ENCODE measurements at regions of chr13 and their contacts with region 1.

Region 1: GRCh38 chr13:29771247-29771646 is 79.2 kb downstream of the UBL3 start:
- DNase-seq: no peak
- ATAC-seq: peak; percentile 74
- H3K4me3 ChIP-seq: no peak overlapping the region
- H3K27ac ChIP-seq: no peak overlapping the region
- H3K4me1 ChIP-seq: no peaks in the 10 kb centered on the region
- H3K27me3 ChIP-seq: no peaks in the 10 kb centered on the region
- CTCF ChIP-seq: peak in 2 of 3 experiments; percentile 20 to 56; a peak in 4 of 6 replicates
- EP300 ChIP-seq: no peak
- POLR2A ChIP-seq: no peak
- RAD21 ChIP-seq: peak; percentile 68

Region 2: DNA sequence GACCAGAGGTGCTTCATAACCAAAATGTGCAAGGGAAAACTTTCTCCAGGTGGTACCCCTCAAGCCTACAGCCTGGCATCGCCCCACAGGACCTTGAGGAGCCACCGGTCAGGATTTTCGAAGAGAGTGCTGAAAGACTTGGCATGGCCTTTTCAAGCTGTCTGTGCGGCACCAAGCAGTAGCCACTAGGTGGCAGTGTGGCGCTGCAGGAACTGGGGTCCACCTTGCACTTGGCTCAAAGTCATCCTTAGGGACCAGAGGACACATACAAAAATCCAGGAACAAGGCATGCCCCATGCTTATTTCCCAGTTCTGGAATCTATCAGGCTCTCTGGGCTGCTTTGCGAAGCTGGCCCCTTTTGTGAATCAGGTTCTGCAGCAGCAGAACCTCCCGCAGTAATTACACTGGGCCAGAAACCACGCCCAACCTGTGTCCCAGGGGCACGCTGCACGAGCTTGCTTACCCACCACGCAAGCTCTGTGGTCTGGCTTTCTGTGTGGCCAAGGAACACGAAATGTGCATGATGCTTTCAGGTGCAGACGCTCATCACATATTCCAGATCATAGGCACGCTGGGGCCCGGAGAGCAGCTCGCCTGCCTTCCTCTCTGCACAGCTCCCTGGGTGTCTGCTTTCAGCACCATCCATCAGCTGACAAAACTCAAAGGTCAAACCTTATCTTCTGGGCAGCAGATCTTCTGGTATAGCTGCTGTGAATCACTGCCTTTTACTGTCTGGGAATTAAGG is 262.9 kb before region 1 on chr13:
- CTCF ChIA-PET with region 1: interaction called, 28 read pairs
- POLR2A ChIA-PET with region 1: no interaction called
- RAD21 ChIA-PET with region 1: interaction called, 8 read pairs
- SMC1A ChIA-PET with region 1: interaction called, 10 read pairs
- in situ Hi-C with region 1: no loop called
- intact Hi-C with region 1: no loop called
- DNase-seq: no peak
- ATAC-seq: peak; percentile 94
- H3K4me3 ChIP-seq: no peak overlapping the region
- H3K27ac ChIP-seq: no peak overlapping the region
- H3K4me1 ChIP-seq: no peaks in the 10 kb centered on the region
- H3K27me3 ChIP-seq: no peaks in the 10 kb centered on the region
- CTCF ChIP-seq: peak; percentile 86 to 98 (median 98)
- EP300 ChIP-seq: no peak
- POLR2A ChIP-seq: peak; percentile 67
- RAD21 ChIP-seq: peak; percentile 91

Region 3: DNA sequence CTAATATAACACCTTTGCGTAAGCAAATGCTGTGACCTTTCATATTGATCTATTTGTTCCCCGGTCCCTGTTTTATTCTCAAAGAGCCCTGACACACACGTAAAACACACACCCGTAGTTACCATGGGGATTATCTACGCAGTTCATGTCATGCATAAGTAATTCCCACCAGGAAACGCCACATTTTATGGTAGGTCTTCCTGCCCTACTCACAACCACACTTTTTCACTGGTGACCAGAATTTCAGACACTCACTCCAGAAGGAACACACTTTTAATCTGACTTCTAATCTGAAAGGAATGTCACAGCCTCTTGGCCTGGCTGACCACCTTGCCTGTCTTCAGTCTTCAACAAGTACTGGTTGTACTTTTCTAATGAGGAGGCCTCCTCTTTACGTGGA is 222.5 kb before region 1 on chr13:
- CTCF ChIA-PET with region 1: no interaction called
- POLR2A ChIA-PET with region 1: no interaction called
- RAD21 ChIA-PET with region 1: no interaction called
- SMC1A ChIA-PET with region 1: no interaction called
- in situ Hi-C with region 1: no loop called
- intact Hi-C with region 1: no loop called
- DNase-seq: no peak
- ATAC-seq: no peak
- H3K4me3 ChIP-seq: no peak overlapping the region
- H3K27ac ChIP-seq: no peak overlapping the region
- H3K4me1 ChIP-seq: peaks cover 3% of the 10 kb centered on the region; the same call in 1 of the 2 replicates
- H3K27me3 ChIP-seq: no peaks in the 10 kb centered on the region
- CTCF ChIP-seq: no peak
- EP300 ChIP-seq: no peak
- POLR2A ChIP-seq: no peak
- RAD21 ChIP-seq: no peak

Region 4: GRCh38 chr13:29782798-29783197 is 11.6 kb after region 1 on chr13:
- CTCF ChIA-PET with region 1: interaction called, 23 read pairs
- POLR2A ChIA-PET with region 1: no interaction called
- RAD21 ChIA-PET with region 1: interaction called, 8 read pairs
- SMC1A ChIA-PET with region 1: interaction called, 10 read pairs
- in situ Hi-C with region 1: no loop called
- intact Hi-C with region 1: no loop called
- DNase-seq: no peak
- ATAC-seq: peak; percentile 88
- H3K4me3 ChIP-seq: no peak overlapping the region
- H3K27ac ChIP-seq: peak overlapping the region; percentile 33; the same call in 1 of the 2 replicates
- H3K4me1 ChIP-seq: no peaks in the 10 kb centered on the region
- H3K27me3 ChIP-seq: no peaks in the 10 kb centered on the region
- CTCF ChIP-seq: no peak
- EP300 ChIP-seq: no peak
- POLR2A ChIP-seq: no peak
- RAD21 ChIP-seq: no peak

Region 5: GRCh38 chr13:29810145-29810742 is 39.0 kb after region 1 on chr13:
- CTCF ChIA-PET with region 1: interaction called, 11 read pairs
- POLR2A ChIA-PET with region 1: no interaction called
- RAD21 ChIA-PET with region 1: interaction called, 5 read pairs
- SMC1A ChIA-PET with region 1: interaction called, 6 read pairs
- in situ Hi-C with region 1: no loop called
- intact Hi-C with region 1: no loop called
- DNase-seq: no peak
- ATAC-seq: peak; percentile 48
- H3K4me3 ChIP-seq: no peak overlapping the region
- H3K27ac ChIP-seq: no peak overlapping the region
- H3K4me1 ChIP-seq: peaks cover 11% of the 10 kb centered on the region; the same call in 1 of the 2 replicates
- H3K27me3 ChIP-seq: no peaks in the 10 kb centered on the region
- CTCF ChIP-seq: no peak
- EP300 ChIP-seq: no peak
- POLR2A ChIP-seq: no peak
- RAD21 ChIP-seq: no peak

Region 6: DNA sequence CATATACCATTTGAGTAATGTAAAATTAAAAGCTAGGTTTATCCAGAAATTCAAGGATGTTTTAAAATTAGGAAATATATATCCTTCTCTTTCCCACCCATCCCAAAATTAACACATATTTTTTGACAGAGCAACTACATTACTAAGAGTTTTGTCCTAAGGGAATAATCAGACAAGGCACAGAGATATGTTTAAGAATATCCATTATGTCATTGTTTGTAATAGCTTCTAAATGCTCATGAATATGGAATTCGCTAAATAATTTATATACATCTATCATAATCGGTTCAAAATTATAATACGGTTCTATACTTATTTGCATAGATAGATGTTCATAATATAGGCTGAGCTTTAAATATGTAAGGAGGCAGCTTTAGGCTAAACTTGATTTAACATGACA is 69.3 kb after region 1 on chr13:
- CTCF ChIA-PET with region 1: interaction called, 112 read pairs
- POLR2A ChIA-PET with region 1: no interaction called
- RAD21 ChIA-PET with region 1: interaction called, 46 read pairs
- SMC1A ChIA-PET with region 1: interaction called, 155 read pairs
- in situ Hi-C with region 1: loop called (anchors 5 kb)
- intact Hi-C with region 1: no loop called
- DNase-seq: no peak
- ATAC-seq: no peak
- H3K4me3 ChIP-seq: no peak overlapping the region
- H3K27ac ChIP-seq: no peak overlapping the region
- H3K4me1 ChIP-seq: no peaks in the 10 kb centered on the region
- H3K27me3 ChIP-seq: no peaks in the 10 kb centered on the region
- CTCF ChIP-seq: no peak
- EP300 ChIP-seq: no peak
- POLR2A ChIP-seq: no peak
- RAD21 ChIP-seq: no peak

Region 7: GRCh38 chr13:29923554-29924481 is 152.6 kb after region 1 on chr13:
- CTCF ChIA-PET with region 1: interaction called, 225 read pairs
- POLR2A ChIA-PET with region 1: no interaction called
- RAD21 ChIA-PET with region 1: interaction called, 73 read pairs
- SMC1A ChIA-PET with region 1: interaction called, 119 read pairs
- in situ Hi-C with region 1: loop called (anchors 5 kb)
- intact Hi-C with region 1: loop called (anchors 5 kb)
- DNase-seq: no peak
- ATAC-seq: peak; percentile 89
- H3K4me3 ChIP-seq: no peak overlapping the region
- H3K27ac ChIP-seq: no peak overlapping the region
- H3K4me1 ChIP-seq: peaks cover 5% of the 10 kb centered on the region; the same call in 1 of the 2 replicates
- H3K27me3 ChIP-seq: no peaks in the 10 kb centered on the region
- CTCF ChIP-seq: peak; percentile 49 to 89 (median 89)
- EP300 ChIP-seq: no peak
- POLR2A ChIP-seq: no peak
- RAD21 ChIP-seq: peak; percentile 58

Region 8: GRCh38 chr13:30504081-30504480 is 732.8 kb after region 1 on chr13:
- CTCF ChIA-PET with region 1: no interaction called
- POLR2A ChIA-PET with region 1: no interaction called
- RAD21 ChIA-PET with region 1: no interaction called
- SMC1A ChIA-PET with region 1: no interaction called
- in situ Hi-C with region 1: no loop called
- intact Hi-C with region 1: no loop called
- DNase-seq: peak; percentile 16
- ATAC-seq: peak; percentile 91
- H3K4me3 ChIP-seq: no peak overlapping the region
- H3K27ac ChIP-seq: no peak overlapping the region
- H3K4me1 ChIP-seq: 0 out of 2 replicates have a peak, but pooled peaks cover 6% of the 10 kb centered on the region
- H3K27me3 ChIP-seq: no peaks in the 10 kb centered on the region
- CTCF ChIP-seq: no peak
- EP300 ChIP-seq: no peak
- POLR2A ChIP-seq: no peak
- RAD21 ChIP-seq: no peak